GM10248 (cell line): ENCODE measurements at regions of chr14 and their contacts with region 1.

Region 1: GRCh38 chr14:50249136-50249800 is 17.9 kb upstream of the SOS2 start:
- DNase-seq: no peak
- CTCF ChIP-seq: no peak

Region 2: DNA sequence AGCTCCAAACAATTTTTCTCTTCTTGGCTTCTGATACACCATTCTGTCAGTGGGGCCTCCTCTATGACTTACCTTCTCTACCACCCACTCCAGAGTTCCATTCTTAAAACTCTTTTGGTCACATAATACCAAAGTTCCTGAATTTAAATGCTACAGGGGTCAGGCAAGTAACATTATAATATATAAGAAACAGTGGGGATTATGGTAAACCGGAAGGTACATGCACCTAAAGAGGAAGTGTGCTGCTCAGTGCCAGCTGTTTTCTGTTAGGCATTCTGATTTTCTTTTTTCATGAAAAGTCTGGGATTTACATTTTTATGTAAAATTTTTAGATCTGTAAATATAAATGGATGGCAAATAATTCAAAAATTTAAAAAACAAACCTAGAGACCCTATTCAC is 57.8 kb before region 1 on chr14:
- CTCF ChIA-PET with region 1: no interaction called
- POLR2A ChIA-PET with region 1: interaction called, 10 read pairs
- DNase-seq: no peak
- CTCF ChIP-seq: no peak

Region 3: DNA sequence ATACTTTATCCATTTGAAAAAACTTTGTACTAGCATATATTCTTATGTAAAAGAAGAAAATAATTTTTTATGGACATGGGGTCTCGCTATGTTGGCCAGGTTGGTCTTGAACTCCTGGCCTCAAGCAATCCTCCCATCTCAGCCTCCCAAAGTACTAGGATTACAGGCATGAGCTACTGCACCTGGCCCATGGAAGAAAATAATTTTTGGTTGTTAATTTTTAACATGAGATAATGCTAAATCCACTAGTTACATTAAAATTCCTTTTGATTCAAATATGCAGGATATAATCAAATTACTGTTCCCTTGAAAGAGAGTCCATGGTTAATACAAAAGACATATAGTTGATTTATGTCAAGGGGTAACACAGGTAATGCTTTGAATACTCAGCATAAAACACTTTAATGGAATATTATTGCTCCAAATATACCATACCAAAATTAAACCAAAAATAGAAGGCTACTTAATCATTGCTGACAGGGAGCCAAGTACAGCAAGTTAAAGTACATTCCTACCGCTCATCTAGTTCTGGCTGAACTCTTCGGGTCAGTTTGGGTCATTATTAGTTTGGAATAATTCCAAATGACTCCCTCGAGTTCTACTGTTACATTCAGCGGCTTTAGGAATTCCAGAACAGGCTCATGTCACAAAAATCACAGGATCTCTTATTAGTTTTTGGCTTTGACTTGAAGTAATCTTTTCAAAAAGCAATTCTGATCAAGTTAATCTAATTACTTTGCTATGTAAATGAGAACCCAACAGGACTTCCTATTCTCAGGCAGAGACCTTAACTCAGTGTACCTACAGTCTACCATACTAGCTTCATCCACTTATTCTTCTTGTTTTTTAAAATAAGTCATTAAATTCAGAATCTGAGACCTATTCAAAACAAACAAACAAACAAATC is 23.9 kb before region 1 on chr14:
- CTCF ChIA-PET with region 1: no interaction called
- POLR2A ChIA-PET with region 1: interaction called, 13 read pairs
- DNase-seq: no peak
- CTCF ChIP-seq: no peak

Region 4: GRCh38 chr14:50260511-50260910 is 11.2 kb after region 1 on chr14:
- CTCF ChIA-PET with region 1: interaction called, 10 read pairs
- POLR2A ChIA-PET with region 1: no interaction called
- DNase-seq: peak; percentile 41
- CTCF ChIP-seq: peak; percentile 53

Region 5: GRCh38 chr14:50335389-50335788 is 86.1 kb after region 1 on chr14:
- CTCF ChIA-PET with region 1: no interaction called
- POLR2A ChIA-PET with region 1: no interaction called
- DNase-seq: no peak
- CTCF ChIP-seq: no peak

Region 6: GRCh38 chr14:50619556-50620141 is 370.4 kb after region 1 on chr14:
- CTCF ChIA-PET with region 1: no interaction called
- POLR2A ChIA-PET with region 1: no interaction called
- DNase-seq: peak; percentile 39
- CTCF ChIP-seq: peak; percentile 57

Region 7: DNA sequence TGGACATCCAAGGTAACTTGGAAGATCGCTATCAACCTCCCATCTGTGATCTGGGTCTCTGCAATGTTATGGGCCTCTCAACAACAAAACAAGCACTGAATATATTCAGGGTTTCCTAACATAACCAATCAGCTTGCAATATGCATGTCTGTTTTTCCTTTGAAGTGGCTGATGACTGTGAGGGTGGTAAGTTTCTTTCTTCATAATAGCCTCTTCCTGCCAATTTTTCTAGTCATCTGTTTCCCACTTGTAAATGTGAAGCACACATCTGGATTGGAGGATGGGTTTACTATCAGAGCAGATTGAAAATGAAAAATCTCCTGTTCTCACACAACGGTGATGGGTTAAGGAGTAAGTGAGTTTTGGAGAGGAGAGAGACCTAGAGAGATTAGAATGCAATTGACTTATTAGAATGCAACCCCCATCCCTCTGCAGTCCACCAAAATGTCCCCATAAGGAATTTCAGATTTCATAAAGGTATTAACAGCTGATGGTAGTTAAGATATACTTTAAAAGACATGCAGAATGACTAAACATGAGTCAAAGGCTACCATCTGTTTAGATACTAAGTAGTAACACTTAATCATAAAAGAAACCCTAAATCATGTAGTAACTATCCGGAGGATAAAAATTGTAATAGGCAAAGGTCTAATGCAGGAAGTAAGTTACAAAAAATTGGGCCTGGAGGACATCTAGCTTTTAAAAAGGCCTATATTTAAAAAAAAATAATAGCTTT is 477.3 kb after region 1 on chr14:
- CTCF ChIA-PET with region 1: no interaction called
- POLR2A ChIA-PET with region 1: interaction called, 11 read pairs
- DNase-seq: peak; percentile 20
- CTCF ChIP-seq: no peak